ENCODE measurements at regions of chr4 and their contacts with region 1.

Region 1: GRCh38 chr4:64829749-64830148 is 420.5 kb upstream of the TECRL start:
- DNase-seq: no peak
- ATAC-seq: no peak
- H3K4me3 ChIP-seq: no peak overlapping the region
- H3K27ac ChIP-seq: no peak overlapping the region
- H3K4me1 ChIP-seq: no peaks in the 10 kb centered on the region
- H3K27me3 ChIP-seq: no peaks in the 10 kb centered on the region
- CTCF ChIP-seq: no peak
- POLR2A ChIP-seq: no peak

Region 2: GRCh38 chr4:65083076-65083475 is 253.3 kb after region 1 on chr4:
- intact Hi-C with region 1: loop called in 1 of 10 experiments (anchors 5 kb)
- DNase-seq: peak in 1 of 5 donors; percentile 14
- ATAC-seq: peak in 3 of 4 donors; percentile 49 to 85 (median 66)
- H3K4me3 ChIP-seq: no peak overlapping the region
- H3K27ac ChIP-seq: no peak overlapping the region
- H3K4me1 ChIP-seq: no peaks in the 10 kb centered on the region
- H3K27me3 ChIP-seq: no peaks in the 10 kb centered on the region
- CTCF ChIP-seq: no peak
- POLR2A ChIP-seq: no peak

Measured in heart left ventricle (tissue), 16 donors.